Naive thymus-derived CD4-positive, alpha-beta T cell (primary cell): ENCODE measurements at regions of chrX and their contacts with region 1.

Region 1: GRCh38 chrX:19372170-19372546 is 28.4 kb downstream of the PDHA1 start:
- DNase-seq: peak; percentile 33 to 66 (median 61)
- ATAC-seq: peak; percentile 89
- H3K4me3 ChIP-seq: peak overlapping the region; percentile 74
- H3K4me3 Mint-ChIP-seq: peak overlapping the region; percentile 78 to 94 (median 88)
- H3K27ac ChIP-seq: no peak overlapping the region
- H3K27ac Mint-ChIP-seq: peak overlapping the region in 8 of 9 donors; percentile 13 to 67 (median 38)
- H3K4me1 ChIP-seq: no peaks in the 10 kb centered on the region
- H3K4me1 Mint-ChIP-seq: peaks cover 4 to 8% (median 8%) of the 10 kb centered on the region in 7 donors
- H3K27me3 ChIP-seq: no peaks in the 10 kb centered on the region
- H3K27me3 Mint-ChIP-seq: no peaks in the 10 kb centered on the region

Region 2: GRCh38 chrX:18973527-18974192 is 398.5 kb before region 1 on chrX:
- CTCF ChIA-PET with region 1: no interaction called
- POLR2A ChIA-PET with region 1: no interaction called
- intact Hi-C with region 1: no loop called
- DNase-seq: no peak
- ATAC-seq: no peak
- H3K4me3 ChIP-seq: no peak overlapping the region
- H3K4me3 Mint-ChIP-seq: no peak overlapping the region
- H3K27ac ChIP-seq: no peak overlapping the region
- H3K27ac Mint-ChIP-seq: no peak overlapping the region
- H3K4me1 ChIP-seq: no peaks in the 10 kb centered on the region
- H3K4me1 Mint-ChIP-seq: peaks cover 0 to 19% (median 13%) of the 10 kb centered on the region in 7 donors
- H3K27me3 ChIP-seq: no peaks in the 10 kb centered on the region
- H3K27me3 Mint-ChIP-seq: no peaks in the 10 kb centered on the region

Region 3: DNA sequence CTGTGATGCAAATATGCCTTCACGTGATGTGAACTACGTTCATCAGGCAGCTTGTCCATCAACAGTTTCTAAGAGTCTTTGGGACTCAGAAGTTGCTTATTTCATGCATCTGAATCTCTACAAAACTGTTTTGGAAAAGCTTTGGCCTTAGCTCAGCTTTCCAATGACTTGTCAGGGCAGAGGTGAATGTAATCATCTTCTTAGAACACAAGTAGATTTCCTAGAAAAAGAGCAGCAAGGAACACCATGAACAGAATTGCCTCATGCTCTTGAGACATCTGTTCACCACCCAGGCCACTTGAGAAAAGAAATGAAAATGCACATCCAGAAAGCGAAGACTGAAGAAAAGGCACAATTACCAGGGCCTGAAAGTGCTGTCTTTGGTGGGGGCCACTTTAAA is 134.3 kb before region 1 on chrX:
- CTCF ChIA-PET with region 1: no interaction called
- POLR2A ChIA-PET with region 1: no interaction called
- intact Hi-C with region 1: no loop called
- DNase-seq: no peak
- ATAC-seq: no peak
- H3K4me3 ChIP-seq: no peak overlapping the region
- H3K4me3 Mint-ChIP-seq: no peak overlapping the region
- H3K27ac ChIP-seq: no peak overlapping the region
- H3K27ac Mint-ChIP-seq: no peak overlapping the region
- H3K4me1 ChIP-seq: no peaks in the 10 kb centered on the region
- H3K4me1 Mint-ChIP-seq: no peaks in the 10 kb centered on the region
- H3K27me3 ChIP-seq: no peaks in the 10 kb centered on the region
- H3K27me3 Mint-ChIP-seq: peaks cover 0 to 15% (median 6%) of the 10 kb centered on the region in 5 donors

Region 4: GRCh38 chrX:19343535-19344408 is 28.4 kb before region 1 on chrX and contains the start of gene PDHA1:
- CTCF ChIA-PET with region 1: no interaction called
- POLR2A ChIA-PET with region 1: no interaction called
- intact Hi-C with region 1: loop called in 1 of 2 experiments (anchors 1 kb)
- DNase-seq: peak; percentile 73 to 94 (median 91)
- ATAC-seq: peak; percentile 99
- H3K4me3 ChIP-seq: peak within 1 kb of the TSS; percentile 71
- H3K4me3 Mint-ChIP-seq: peak within 1 kb of the TSS; percentile 79 to 90 (median 87)
- H3K27ac ChIP-seq: peak within 1 kb of the TSS; percentile 86
- H3K27ac Mint-ChIP-seq: peak within 1 kb of the TSS; percentile 82 to 95 (median 89)
- H3K4me1 ChIP-seq: peaks cover 6 to 9% of the 10 kb centered on the region in 2 donors
- H3K4me1 Mint-ChIP-seq: peaks cover 0 to 28% (median 14%) of the 10 kb centered on the region in 7 donors
- H3K27me3 ChIP-seq: no peaks in the 10 kb centered on the region
- H3K27me3 Mint-ChIP-seq: no peaks in the 10 kb centered on the region
- total RNA-seq, gene PDHA1: 113 to 123 (median 119) TPM

Region 5: GRCh38 chrX:19354625-19355024 is 17.5 kb before region 1 on chrX:
- CTCF ChIA-PET with region 1: no interaction called
- POLR2A ChIA-PET with region 1: no interaction called
- intact Hi-C with region 1: no loop called
- DNase-seq: no peak
- ATAC-seq: no peak
- H3K4me3 ChIP-seq: no peak overlapping the region
- H3K4me3 Mint-ChIP-seq: no peak overlapping the region
- H3K27ac ChIP-seq: no peak overlapping the region
- H3K27ac Mint-ChIP-seq: no peak overlapping the region
- H3K4me1 ChIP-seq: peaks cover 0 to 12% of the 10 kb centered on the region in 2 donors
- H3K4me1 Mint-ChIP-seq: peaks cover 0 to 12% (median 5%) of the 10 kb centered on the region in 7 donors
- H3K27me3 ChIP-seq: no peaks in the 10 kb centered on the region
- H3K27me3 Mint-ChIP-seq: no peaks in the 10 kb centered on the region

Region 6: DNA sequence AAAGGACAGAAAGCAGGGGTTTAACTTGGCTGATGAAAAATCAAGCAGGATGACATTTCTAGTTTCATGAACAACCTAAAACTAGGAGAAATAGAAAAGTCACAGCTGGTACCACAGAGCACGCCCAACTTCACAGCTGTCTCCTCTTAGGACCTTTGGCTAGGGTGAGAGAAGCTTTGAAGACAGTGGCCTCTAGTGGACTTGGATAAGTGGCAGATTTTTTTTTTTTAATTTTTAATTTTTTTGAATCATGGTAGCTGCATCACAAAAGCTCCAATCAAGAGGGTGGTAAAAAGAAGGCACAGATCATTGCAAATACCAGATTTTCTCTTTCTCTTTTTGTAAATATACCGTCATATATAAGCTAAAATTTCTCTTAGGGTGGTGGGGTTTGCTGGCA is 163.3 kb after region 1 on chrX:
- CTCF ChIA-PET with region 1: no interaction called
- POLR2A ChIA-PET with region 1: interaction called, 3 read pairs
- intact Hi-C with region 1: loop called (anchors 2 to 5 kb)
- DNase-seq: no peak
- ATAC-seq: no peak
- H3K4me3 ChIP-seq: no peak overlapping the region
- H3K4me3 Mint-ChIP-seq: no peak overlapping the region
- H3K27ac ChIP-seq: no peak overlapping the region
- H3K27ac Mint-ChIP-seq: peak overlapping the region in 2 of 9 donors; percentile 50 to 56
- H3K4me1 ChIP-seq: no peaks in the 10 kb centered on the region
- H3K4me1 Mint-ChIP-seq: peaks cover 0 to 1% (median 0%) of the 10 kb centered on the region in 7 donors
- H3K27me3 ChIP-seq: no peaks in the 10 kb centered on the region
- H3K27me3 Mint-ChIP-seq: no peaks in the 10 kb centered on the region

Region 7: GRCh38 chrX:19990556-19991349 is 618.6 kb after region 1 on chrX and contains the start of gene BCLAF3:
- CTCF ChIA-PET with region 1: no interaction called
- POLR2A ChIA-PET with region 1: no interaction called
- intact Hi-C with region 1: loop called (anchors 2 kb)
- DNase-seq: peak; percentile 64 to 91 (median 71)
- ATAC-seq: peak; percentile 94
- H3K4me3 ChIP-seq: peak within 1 kb of the TSS; percentile 51
- H3K4me3 Mint-ChIP-seq: peak within 1 kb of the TSS; percentile 82 to 96 (median 90)
- H3K27ac ChIP-seq: peak within 1 kb of the TSS; percentile 71
- H3K27ac Mint-ChIP-seq: peak within 1 kb of the TSS; percentile 79 to 98 (median 92)
- H3K4me1 ChIP-seq: no peaks in the 10 kb centered on the region
- H3K4me1 Mint-ChIP-seq: peaks cover 7 to 30% (median 19%) of the 10 kb centered on the region in 7 donors
- H3K27me3 ChIP-seq: no peaks in the 10 kb centered on the region
- H3K27me3 Mint-ChIP-seq: no peaks in the 10 kb centered on the region
- total RNA-seq, gene BCLAF3: 6.2 to 14.1 (median 11.7) TPM

Region 8: GRCh38 chrX:20128670-20129069 is 756.5 kb after region 1 on chrX:
- CTCF ChIA-PET with region 1: no interaction called
- POLR2A ChIA-PET with region 1: no interaction called
- intact Hi-C with region 1: loop called in 1 of 2 experiments (anchors 5 kb)
- DNase-seq: no peak
- ATAC-seq: no peak
- H3K4me3 ChIP-seq: no peak overlapping the region
- H3K4me3 Mint-ChIP-seq: no peak overlapping the region
- H3K27ac ChIP-seq: no peak overlapping the region
- H3K27ac Mint-ChIP-seq: peak overlapping the region in 1 of 9 donors; percentile 47
- H3K4me1 ChIP-seq: no peaks in the 10 kb centered on the region
- H3K4me1 Mint-ChIP-seq: peaks cover 0 to 11% (median 0%) of the 10 kb centered on the region in 7 donors
- H3K27me3 ChIP-seq: no peaks in the 10 kb centered on the region
- H3K27me3 Mint-ChIP-seq: no peaks in the 10 kb centered on the region